ENCODE measurements at regions of chr1 and their contacts with region 1.

Region 1: DNA sequence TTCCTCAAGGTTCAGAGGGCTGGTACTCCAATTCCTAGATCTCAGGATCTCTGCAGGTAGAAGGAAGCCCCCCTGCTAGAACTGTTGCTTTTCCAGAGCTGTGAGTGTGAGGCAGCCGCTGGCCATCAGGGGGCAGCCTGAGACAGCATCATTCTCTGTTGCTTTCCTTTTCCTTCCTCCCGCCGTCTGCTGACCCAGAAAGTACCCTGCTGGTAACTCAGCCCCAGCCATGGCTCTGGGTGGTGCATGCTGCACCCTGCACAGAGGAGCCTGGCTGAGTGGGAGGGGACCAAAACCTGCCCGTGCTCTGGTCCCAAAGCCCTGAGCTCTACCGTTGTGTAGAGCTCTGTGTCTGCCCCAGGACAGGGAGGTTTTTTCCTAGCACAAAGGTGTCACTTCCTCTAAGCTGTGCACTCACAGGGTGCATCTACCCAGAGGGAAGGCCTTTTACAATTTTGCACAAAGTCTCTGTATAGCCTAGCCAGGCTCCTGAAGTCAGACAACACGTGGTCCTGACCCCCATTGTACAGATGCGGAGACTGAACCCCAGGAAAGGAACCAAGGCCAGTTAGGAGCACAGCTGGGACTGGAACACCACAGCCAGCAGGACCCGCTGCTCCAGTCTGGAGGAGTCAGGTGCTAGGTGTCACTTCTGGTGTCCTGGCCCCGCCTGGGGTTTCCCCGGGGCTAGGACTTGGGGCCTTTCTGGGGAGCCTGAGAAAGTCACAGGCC is 5.6 kb upstream of the FAM131C start:
- DNase-seq: peak; percentile 79 to 83
- H3K4me3 ChIP-seq: no peak overlapping the region
- H3K4me3 Mint-ChIP-seq: no peak overlapping the region
- H3K27ac Mint-ChIP-seq: no peak overlapping the region
- H3K4me1 ChIP-seq: peaks cover 5% of the 10 kb centered on the region; the same call in 1 of the 2 replicates
- H3K4me1 Mint-ChIP-seq: no peaks in the 10 kb centered on the region
- H3K27me3 ChIP-seq: no peaks in the 10 kb centered on the region
- H3K27me3 Mint-ChIP-seq: no peaks in the 10 kb centered on the region
- CTCF ChIP-seq: peak; percentile 68 to 85

Region 2: DNA sequence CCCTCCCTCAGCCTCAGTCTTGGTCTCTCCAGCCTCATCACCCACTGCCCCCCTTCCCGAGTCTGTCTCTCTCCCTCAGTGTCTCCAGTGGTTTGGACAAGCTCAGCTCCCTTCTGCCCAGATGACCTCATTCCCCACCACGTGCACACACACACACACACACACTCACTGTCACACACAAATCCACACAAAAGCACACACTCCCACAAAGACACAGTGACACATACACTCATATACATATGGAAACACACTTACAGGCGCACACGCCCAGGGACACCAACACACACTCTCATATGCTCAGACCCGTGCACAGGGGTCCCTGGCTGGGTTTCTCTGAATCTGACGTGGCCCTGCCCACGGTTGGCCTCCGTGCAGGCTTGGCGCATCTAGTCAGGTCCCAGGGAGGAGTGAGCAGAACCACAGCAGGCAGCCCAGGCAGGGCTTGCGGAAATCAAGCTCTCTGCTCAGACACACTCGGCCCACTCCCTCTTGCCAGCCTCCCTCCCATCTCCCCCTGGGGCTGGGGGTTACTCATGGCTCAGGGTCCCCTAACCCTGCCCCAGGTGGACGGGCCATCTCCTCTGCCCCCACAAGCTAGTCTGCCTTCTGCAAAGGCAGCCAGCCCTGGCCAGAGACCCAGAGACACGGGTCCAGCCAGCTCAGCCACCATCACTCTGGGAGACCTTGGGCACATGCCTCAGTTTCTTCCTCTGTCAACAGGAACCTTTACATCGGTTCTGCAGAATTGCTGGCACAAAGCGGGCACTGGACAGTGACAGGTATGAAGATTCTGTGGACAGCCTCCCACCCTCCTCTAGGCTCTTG is 32.9 kb after region 1 on chr1:
- CTCF ChIA-PET with region 1: interaction called, 3 read pairs
- POLR2A ChIA-PET with region 1: no interaction called
- intact Hi-C with region 1: loop called (anchors 2 kb)
- DNase-seq: peak in 1 of 2 experiments; percentile 27
- H3K4me3 ChIP-seq: no peak overlapping the region
- H3K4me3 Mint-ChIP-seq: no peak overlapping the region
- H3K27ac Mint-ChIP-seq: no peak overlapping the region
- H3K4me1 ChIP-seq: peaks cover 8% of the 10 kb centered on the region; the same call in 1 of the 2 replicates
- H3K4me1 Mint-ChIP-seq: no peaks in the 10 kb centered on the region
- H3K27me3 ChIP-seq: no peaks in the 10 kb centered on the region
- H3K27me3 Mint-ChIP-seq: no peaks in the 10 kb centered on the region
- CTCF ChIP-seq: no peak

Region 3: DNA sequence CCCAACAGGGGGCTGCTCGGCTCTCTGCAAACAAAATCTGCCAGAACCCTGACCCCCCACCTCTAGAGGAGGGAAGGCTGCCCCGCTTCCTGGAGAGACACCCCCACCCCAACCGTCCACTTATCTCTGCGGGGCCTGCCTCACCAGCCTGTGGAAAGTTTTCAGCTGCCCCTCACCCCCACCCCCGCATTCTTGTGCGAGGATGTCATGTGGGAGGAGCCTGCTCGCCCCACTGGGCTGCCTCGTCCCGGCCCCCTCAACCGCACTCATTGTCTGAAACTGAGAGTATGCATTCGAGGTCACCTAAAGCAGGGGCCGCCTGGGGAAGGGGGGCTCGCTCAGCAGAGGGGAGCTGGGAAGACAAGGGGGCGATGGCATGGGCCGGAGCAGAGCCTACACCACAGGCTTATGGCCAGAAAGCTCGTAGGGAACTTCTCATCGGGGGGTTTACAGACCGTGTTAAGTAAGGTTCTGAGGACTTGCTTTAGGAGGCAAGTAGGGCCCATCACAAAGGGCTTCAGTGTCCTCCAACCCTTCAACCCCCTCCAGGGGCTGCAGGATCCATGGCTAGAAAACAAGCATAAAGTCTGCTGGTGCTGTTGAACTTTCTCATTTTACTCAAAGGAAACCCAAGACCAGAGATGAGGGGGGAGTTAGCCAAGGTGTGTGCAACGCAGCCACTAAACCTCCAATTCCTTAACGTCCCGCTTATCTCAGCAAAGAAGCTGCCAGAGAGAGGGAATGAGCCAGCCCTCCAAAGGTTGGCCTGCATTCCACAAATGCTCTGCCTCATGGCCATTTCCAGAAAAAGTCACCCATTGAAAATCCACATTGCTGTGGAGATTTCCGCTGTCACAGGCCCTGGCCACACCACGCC is 67.4 kb after region 1 on chr1:
- CTCF ChIA-PET with region 1: interaction called, 15 read pairs
- POLR2A ChIA-PET with region 1: no interaction called
- intact Hi-C with region 1: no loop called
- DNase-seq: peak; percentile 91 to 92
- H3K4me3 ChIP-seq: no peak overlapping the region
- H3K4me3 Mint-ChIP-seq: peak overlapping the region; percentile 72
- H3K27ac Mint-ChIP-seq: peak overlapping the region; percentile 96
- H3K4me1 ChIP-seq: peaks cover 75% of the 10 kb centered on the region
- H3K4me1 Mint-ChIP-seq: peaks cover 31% of the 10 kb centered on the region
- H3K27me3 ChIP-seq: no peaks in the 10 kb centered on the region
- H3K27me3 Mint-ChIP-seq: no peaks in the 10 kb centered on the region
- CTCF ChIP-seq: no peak

Region 4: GRCh38 chr1:16187748-16188401 is 108.8 kb after region 1 on chr1:
- CTCF ChIA-PET with region 1: interaction called, 24 read pairs
- POLR2A ChIA-PET with region 1: no interaction called
- intact Hi-C with region 1: loop called (anchors 1 kb)
- DNase-seq: peak; percentile 73 to 85
- H3K4me3 ChIP-seq: no peak overlapping the region
- H3K4me3 Mint-ChIP-seq: no peak overlapping the region
- H3K27ac Mint-ChIP-seq: no peak overlapping the region
- H3K4me1 ChIP-seq: peaks cover 26% of the 10 kb centered on the region
- H3K4me1 Mint-ChIP-seq: peaks cover 15% of the 10 kb centered on the region
- H3K27me3 ChIP-seq: no peaks in the 10 kb centered on the region
- H3K27me3 Mint-ChIP-seq: no peaks in the 10 kb centered on the region
- CTCF ChIP-seq: peak; percentile 85 to 89

Region 5: DNA sequence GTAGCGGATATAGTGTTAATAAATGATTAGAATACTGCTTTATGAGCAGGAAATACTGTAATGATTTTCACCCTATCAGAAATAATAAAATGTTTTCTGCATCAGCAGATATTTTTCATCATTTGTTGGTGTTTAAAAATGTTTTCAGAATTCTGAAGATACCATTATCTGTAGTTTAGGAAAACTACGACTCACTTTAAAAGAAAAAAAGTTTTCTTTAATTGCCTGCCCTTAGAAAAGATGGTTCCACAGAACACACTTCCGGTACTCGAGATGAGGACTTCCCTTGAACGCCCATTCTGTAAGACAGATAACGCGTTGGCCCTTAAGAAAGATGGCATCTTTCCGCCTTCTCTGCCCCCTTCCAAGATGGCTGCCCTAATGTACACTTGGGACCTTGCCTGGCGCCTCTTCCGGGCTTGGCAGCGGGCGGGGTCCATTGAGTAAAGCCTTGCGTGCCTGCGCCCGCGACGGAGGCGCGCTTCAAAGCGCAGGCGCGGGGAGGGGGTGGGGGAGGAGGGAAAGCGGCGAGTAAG is 287.7 kb after region 1 on chr1 and contains the start of gene SZRD1:
- CTCF ChIA-PET with region 1: interaction called, 7 read pairs
- POLR2A ChIA-PET with region 1: no interaction called
- intact Hi-C with region 1: loop called (anchors 10 kb)
- DNase-seq: peak; percentile 93 to 96
- H3K4me3 ChIP-seq: peak within 1 kb of the TSS; percentile 78
- H3K4me3 Mint-ChIP-seq: peak within 1 kb of the TSS; percentile 86
- H3K27ac Mint-ChIP-seq: peak within 1 kb of the TSS; percentile 93
- H3K4me1 ChIP-seq: peaks cover 12% of the 10 kb centered on the region
- H3K4me1 Mint-ChIP-seq: peaks cover 8% of the 10 kb centered on the region
- H3K27me3 ChIP-seq: no peaks in the 10 kb centered on the region
- H3K27me3 Mint-ChIP-seq: no peaks in the 10 kb centered on the region
- CTCF ChIP-seq: no peak
- total RNA-seq, gene SZRD1: 93.8 and 98.7 TPM in 2 replicates

Measured in Caco-2 (cell line).